ENCODE measurements at regions of chr4 and their contacts with region 1.

Region 1: GRCh38 chr4:47442980-47443379 is 20.5 kb downstream of the COMMD8 start:
- DNase-seq: no peak
- H3K4me3 ChIP-seq: no peak overlapping the region
- H3K27ac ChIP-seq: no peak overlapping the region
- H3K4me1 ChIP-seq: no peaks in the 10 kb centered on the region
- H3K27me3 ChIP-seq: no peaks in the 10 kb centered on the region
- CTCF ChIP-seq: no peak
- POLR2A ChIP-seq: no peak

Region 2: DNA sequence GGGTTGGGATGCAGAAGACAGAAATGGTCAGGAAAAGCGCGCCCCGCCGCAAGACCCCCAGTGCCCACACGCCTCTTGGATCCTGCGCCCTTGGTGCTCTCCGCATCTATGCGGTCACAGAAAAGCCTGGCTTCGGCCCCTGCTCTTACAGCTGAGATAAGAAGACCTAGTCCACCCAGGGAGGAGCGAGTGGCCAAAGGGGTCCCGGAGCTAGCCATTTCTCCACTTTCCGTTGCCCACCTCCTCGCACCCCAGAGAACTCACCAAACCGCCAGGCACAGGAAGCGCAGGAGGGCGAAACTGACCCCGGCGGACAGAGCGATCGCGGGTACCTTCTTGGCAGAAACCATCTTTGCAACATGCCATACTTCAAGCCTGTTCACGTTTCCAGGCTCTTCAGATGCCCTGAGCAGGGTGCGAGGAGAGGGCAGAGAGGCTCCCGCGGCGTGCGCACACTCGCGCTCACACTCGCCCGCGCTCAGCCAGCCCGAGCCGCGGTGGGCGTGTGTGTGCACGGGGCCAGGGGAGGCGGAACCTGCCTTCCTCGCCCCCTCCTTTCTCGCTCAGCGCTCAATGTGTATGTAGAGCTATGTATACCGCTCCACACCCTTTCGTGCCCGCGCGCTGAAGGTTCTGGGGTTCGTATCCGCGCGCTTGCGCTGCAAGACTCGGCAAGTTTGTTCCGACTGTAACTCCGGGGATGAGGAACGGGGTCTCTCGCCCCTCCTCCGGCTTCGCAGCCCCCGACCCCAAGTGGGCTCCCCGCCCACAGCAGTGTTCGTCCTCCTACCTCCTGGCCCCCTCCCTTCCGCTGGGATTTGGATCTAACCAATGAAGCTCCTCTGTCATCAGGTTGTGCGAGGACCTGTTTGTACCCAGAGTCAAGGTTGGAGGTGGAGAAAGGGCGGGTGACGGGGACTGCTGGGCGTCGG is 449.6 kb before region 1 on chr4 and contains the start of gene GABRA4:
- intact Hi-C with region 1: loop called (anchors 5 kb)
- DNase-seq: no peak
- H3K4me3 ChIP-seq: peak within 1 kb of the TSS; percentile 16 to 55 (median 39)
- H3K27ac ChIP-seq: no peak within 1 kb of the TSS
- H3K4me1 ChIP-seq: no peaks in the 10 kb centered on the region
- H3K27me3 ChIP-seq: peaks cover 0 to 33% of the 10 kb centered on the region in 2 donors
- CTCF ChIP-seq: no peak
- POLR2A ChIP-seq: no peak
- total RNA-seq, gene GABRA4: 0.15 TPM in 1 of 3 donors, not detected in the others

Region 3: GRCh38 chr4:47801481-47802002 is 358.6 kb after region 1 on chr4:
- intact Hi-C with region 1: loop called (anchors 10 kb)
- DNase-seq: no peak
- H3K4me3 ChIP-seq: no peak overlapping the region
- H3K27ac ChIP-seq: no peak overlapping the region
- H3K4me1 ChIP-seq: no peaks in the 10 kb centered on the region
- H3K27me3 ChIP-seq: no peaks in the 10 kb centered on the region
- CTCF ChIP-seq: no peak
- POLR2A ChIP-seq: no peak

Measured in breast epithelium (tissue), 4 donors.